Caco-2 (cell line): ENCODE measurements at regions of chr7 and their contacts with region 1.

Region 1: DNA sequence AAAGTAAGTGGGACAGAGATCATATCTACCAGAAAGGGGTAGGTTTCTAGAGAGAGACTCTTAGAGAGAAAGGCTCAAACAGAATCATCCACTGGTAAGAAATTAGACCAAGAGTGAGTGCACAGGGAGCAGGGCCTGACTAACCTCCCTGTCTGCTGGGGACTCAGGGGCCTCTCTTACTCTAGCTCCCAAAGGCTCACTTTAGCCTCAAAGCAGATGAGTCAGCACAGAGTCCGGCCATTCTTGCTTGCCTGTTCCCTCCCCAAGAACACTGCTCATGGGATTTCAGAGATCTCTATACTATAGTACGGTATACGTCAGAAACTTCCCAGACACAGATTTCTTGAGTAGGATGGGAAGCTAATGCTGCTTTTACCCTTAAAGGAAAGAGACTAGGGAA is 32.7 kb downstream of the RBM28 start:
- DNase-seq: no peak
- H3K4me3 ChIP-seq: no peak overlapping the region
- H3K4me3 Mint-ChIP-seq: no peak overlapping the region
- H3K27ac Mint-ChIP-seq: no peak overlapping the region
- H3K4me1 ChIP-seq: no peaks in the 10 kb centered on the region; the same call in 1 of the 2 replicates
- H3K4me1 Mint-ChIP-seq: no peaks in the 10 kb centered on the region
- H3K27me3 ChIP-seq: no peaks in the 10 kb centered on the region
- H3K27me3 Mint-ChIP-seq: no peaks in the 10 kb centered on the region
- CTCF ChIP-seq: no peak

Region 2: DNA sequence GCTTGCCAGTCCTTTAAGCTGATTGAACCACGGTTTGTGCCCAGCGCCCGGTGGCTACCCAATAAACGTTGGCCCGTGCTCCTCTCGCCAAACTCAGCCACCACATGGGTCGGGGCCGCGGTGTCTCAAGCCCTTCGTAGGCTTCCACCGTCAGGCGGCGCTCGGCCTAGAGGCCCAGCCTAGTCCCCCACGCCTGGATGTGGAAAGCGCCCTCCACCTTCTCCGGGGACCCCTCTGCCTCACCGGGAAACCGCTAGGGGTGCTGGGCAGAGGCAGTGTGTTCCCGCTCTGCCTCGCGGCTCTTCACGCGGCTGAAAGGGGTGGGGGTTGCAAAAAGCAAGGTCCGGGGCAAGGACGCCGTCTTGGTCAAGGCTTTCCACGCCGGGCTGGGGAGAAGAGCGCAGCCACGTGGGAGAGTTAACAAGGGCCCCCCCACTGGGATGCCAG is 40.2 kb before region 1 on chr7:
- CTCF ChIA-PET with region 1: no interaction called
- POLR2A ChIA-PET with region 1: no interaction called
- intact Hi-C with region 1: loop called (anchors 1 kb)
- DNase-seq: no peak
- H3K4me3 ChIP-seq: no peak overlapping the region
- H3K4me3 Mint-ChIP-seq: no peak overlapping the region
- H3K27ac Mint-ChIP-seq: no peak overlapping the region
- H3K4me1 ChIP-seq: peaks cover 12% of the 10 kb centered on the region
- H3K4me1 Mint-ChIP-seq: peaks cover 15% of the 10 kb centered on the region
- H3K27me3 ChIP-seq: no peaks in the 10 kb centered on the region
- H3K27me3 Mint-ChIP-seq: no peaks in the 10 kb centered on the region
- CTCF ChIP-seq: no peak